ENCODE measurements at regions of chr3 and their contacts with region 1.

Region 1: DNA sequence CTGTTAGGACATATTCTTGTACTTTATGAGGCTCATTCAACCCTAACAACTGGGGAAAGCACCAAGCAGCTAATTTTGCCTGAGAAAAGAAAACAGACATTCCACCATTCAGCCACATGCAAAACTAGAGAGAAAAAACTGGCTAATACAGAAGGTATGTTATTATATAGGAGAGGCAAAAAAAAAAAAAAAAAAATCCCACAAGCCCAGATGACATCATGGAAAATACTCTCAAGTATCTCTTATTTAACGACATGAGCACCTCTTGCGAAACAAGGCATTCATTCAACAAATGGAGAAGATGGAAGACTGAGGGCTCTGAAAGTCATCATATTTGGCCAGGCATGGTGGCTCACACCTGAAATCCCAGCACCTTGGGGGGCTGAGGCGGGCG is 61.5 kb downstream of the PRICKLE2 start:
- DNase-seq: no peak
- H3K4me3 ChIP-seq: no peak overlapping the region
- H3K27ac ChIP-seq: peak overlapping the region; percentile 7 to 56 (median 48)
- H3K4me1 ChIP-seq: peaks cover 31 to 86% (median 82%) of the 10 kb centered on the region in 4 donors
- H3K27me3 ChIP-seq: no peaks in the 10 kb centered on the region
- CTCF ChIP-seq: no peak
- EP300 ChIP-seq: no peak
- POLR2A ChIP-seq: no peak

Region 2: GRCh38 chr3:63679186-63679585 is 484.6 kb before region 1 on chr3:
- intact Hi-C with region 1: no loop called
- DNase-seq: no peak
- H3K4me3 ChIP-seq: no peak overlapping the region
- H3K27ac ChIP-seq: no peak overlapping the region
- H3K4me1 ChIP-seq: no peaks in the 10 kb centered on the region
- H3K27me3 ChIP-seq: no peaks in the 10 kb centered on the region
- CTCF ChIP-seq: no peak
- EP300 ChIP-seq: no peak
- POLR2A ChIP-seq: no peak

Region 3: GRCh38 chr3:64030741-64031140 is 133.0 kb before region 1 on chr3:
- intact Hi-C with region 1: loop called (anchors 5 kb)
- DNase-seq: no peak
- H3K4me3 ChIP-seq: peak overlapping the region; percentile 19 to 42 (median 34)
- H3K27ac ChIP-seq: peak overlapping the region in 2 of 4 donors; percentile 33 to 62
- H3K4me1 ChIP-seq: peaks cover 0 to 23% (median 19%) of the 10 kb centered on the region in 4 donors
- H3K27me3 ChIP-seq: no peaks in the 10 kb centered on the region
- CTCF ChIP-seq: peak; percentile 90 to 93 (median 90)
- EP300 ChIP-seq: no peak
- POLR2A ChIP-seq: no peak